Activated T-helper 1 cell treated with anti-CD3 and anti-CD28 coated beads, Interleukin-12 subunit alpha, Interleukin-12 subunit beta, Interleukin-2, Interleukin-4 antibody, amounts not matched to agents 30 ng/mL and 10 ng/mL and 1 ng/mL, durations not matched to agents 14 hours and 24 hours and 36 hours (primary cell): ENCODE measurements at regions of chr11 and their contacts with region 1.

Region 1: DNA sequence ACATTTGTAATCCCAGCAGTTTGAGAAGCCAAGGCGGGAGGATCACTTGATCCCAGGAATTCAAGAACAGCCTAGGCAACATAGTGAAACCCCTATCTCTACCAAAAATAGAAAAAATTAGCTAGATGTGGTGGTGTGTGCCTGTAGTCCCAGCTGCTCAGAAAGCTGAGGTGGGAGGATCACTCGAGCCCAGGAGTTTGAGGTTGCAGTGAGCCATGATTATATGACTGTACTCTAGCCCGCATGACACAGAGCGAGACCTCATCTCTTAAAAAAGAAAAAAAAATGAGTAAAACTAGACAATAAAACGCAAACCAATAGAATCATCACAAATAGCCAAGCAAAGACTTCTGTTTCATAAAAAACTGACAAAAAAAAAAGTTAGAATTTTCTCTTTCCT is 21.8 kb downstream of the NUCB2 start:
- DNase-seq: peak; percentile 23
- H3K4me3 Mint-ChIP-seq: no peak overlapping the region
- H3K27ac Mint-ChIP-seq: peak overlapping the region; percentile 64
- H3K4me1 Mint-ChIP-seq: peaks cover 31% of the 10 kb centered on the region
- H3K27me3 Mint-ChIP-seq: no peaks in the 10 kb centered on the region

Region 2: DNA sequence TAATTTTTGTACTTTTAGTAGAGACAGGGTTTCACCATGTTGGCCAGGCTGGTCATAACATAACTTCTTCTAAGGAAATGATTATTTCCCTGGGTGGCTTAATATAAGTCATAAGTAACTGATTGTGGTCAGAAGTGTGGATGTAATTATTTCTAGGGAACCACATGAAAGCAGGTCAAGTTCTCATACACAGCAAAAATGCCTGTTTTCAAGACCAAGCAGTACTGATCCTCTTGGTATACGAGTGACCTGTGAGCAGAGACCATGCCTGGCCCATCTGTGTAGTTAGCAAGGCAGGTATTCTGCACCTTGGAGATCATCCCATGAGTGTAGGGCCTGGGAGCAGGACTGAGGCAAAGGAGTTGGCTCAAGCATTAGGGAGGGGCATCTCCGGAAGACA is 54.3 kb before region 1 on chr11:
- intact Hi-C with region 1: loop called (anchors 1 kb)
- DNase-seq: no peak
- H3K4me3 Mint-ChIP-seq: no peak overlapping the region
- H3K27ac Mint-ChIP-seq: no peak overlapping the region
- H3K4me1 Mint-ChIP-seq: peaks cover 4% of the 10 kb centered on the region
- H3K27me3 Mint-ChIP-seq: peaks cover 49% of the 10 kb centered on the region

Region 3: DNA sequence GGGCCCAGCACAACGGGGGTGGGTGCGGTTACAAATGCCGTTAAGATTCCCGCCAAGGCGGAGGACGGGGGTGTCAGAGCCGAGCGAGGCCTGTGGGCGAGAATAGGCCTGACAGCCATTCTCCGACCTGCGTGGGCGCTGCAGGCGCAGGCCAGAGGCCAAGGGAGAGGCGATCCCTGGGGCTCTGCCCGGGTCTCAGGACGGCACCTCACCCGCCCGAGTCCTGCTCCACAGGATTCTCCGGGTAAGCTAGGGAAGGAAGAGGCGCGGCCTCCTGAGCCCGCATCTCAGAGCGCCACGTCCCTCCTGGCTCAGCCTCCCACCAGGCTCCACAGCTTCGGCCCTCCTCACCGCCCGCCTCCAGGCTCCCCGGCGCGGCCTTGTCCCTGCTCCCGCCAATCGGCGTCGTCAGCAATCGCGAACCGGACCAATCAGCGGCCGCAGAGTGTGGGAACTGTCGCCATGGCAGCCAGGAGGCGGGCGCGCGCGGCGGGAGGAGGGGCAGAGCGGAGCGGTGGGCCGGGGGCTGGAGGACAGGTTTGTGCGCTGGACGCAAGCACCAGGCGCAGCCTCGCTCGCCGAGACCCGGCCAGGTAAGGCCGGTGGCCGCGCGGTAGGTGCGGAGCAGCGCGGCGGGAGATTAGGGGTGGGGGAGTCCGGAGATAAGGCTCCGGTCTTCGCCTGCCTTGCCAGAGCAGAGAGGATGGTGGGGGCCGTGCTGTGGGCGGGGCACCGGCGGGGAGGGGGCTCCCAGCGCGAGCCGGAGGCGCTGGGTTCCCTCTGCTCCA is 21.9 kb before region 1 on chr11 and contains the start of gene NUCB2:
- intact Hi-C with region 1: loop called (anchors 1 kb)
- DNase-seq: peak; percentile 95
- H3K4me3 Mint-ChIP-seq: peak within 1 kb of the TSS; percentile 87
- H3K27ac Mint-ChIP-seq: peak within 1 kb of the TSS; percentile 77
- H3K4me1 Mint-ChIP-seq: peaks cover 48% of the 10 kb centered on the region
- H3K27me3 Mint-ChIP-seq: peaks cover 3% of the 10 kb centered on the region
- total RNA-seq, gene NUCB2: 51.1 and 61.7 TPM in 2 replicates

Region 4: GRCh38 chr11:17286332-17286731 is 12.0 kb before region 1 on chr11:
- intact Hi-C with region 1: loop called (anchors 1 kb)
- DNase-seq: no peak
- H3K4me3 Mint-ChIP-seq: no peak overlapping the region
- H3K27ac Mint-ChIP-seq: peak overlapping the region; percentile 44
- H3K4me1 Mint-ChIP-seq: peaks cover 50% of the 10 kb centered on the region
- H3K27me3 Mint-ChIP-seq: peaks cover 1% of the 10 kb centered on the region

Region 5: GRCh38 chr11:17314232-17314547 is 15.9 kb after region 1 on chr11:
- intact Hi-C with region 1: loop called (anchors 1 kb)
- DNase-seq: no peak
- H3K4me3 Mint-ChIP-seq: no peak overlapping the region
- H3K27ac Mint-ChIP-seq: no peak overlapping the region
- H3K4me1 Mint-ChIP-seq: no peaks in the 10 kb centered on the region
- H3K27me3 Mint-ChIP-seq: no peaks in the 10 kb centered on the region

Region 6: DNA sequence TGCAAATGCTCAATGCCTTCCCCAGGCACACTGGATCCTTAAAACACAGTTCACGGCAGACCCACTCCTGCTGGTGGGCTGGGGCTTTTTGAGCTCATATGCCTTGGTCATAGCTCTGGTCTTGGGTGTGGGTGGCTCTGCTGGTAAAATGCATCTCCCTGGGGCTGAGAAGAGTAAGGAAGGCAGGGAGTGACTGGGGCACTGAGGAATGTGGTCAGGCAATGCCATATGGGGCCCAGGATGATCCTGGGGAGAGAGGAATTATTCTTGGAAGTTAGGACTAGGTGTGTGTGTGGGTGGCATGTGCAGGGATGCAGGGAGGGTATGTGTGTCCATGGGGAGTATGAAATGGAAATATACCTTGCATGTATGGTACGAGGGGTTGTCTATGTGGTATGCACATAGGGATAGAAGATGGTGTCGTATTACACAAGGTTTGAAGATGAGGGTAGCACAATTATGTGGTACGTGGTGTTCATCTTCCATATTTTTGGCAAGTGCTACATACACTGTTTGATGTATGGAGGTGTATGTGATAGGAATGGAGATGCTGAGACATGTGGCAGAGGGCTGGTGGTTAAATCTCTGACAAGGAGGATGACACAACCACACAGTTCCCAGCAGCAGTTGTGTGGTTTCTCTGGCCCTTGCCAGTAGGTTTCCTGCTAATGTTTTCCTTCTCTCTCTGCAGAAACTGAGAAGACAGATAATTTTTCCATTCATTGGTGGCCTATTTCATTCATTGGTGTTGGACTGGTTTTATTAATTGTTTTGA is 70.1 kb after region 1 on chr11:
- intact Hi-C with region 1: loop called (anchors 1 kb)
- DNase-seq: no peak
- H3K4me3 Mint-ChIP-seq: no peak overlapping the region
- H3K27ac Mint-ChIP-seq: peak overlapping the region; percentile 33
- H3K4me1 Mint-ChIP-seq: peaks cover 19% of the 10 kb centered on the region
- H3K27me3 Mint-ChIP-seq: peaks cover 12% of the 10 kb centered on the region